Activated CD4-positive, alpha-beta T cell treated with anti-CD3 and anti-CD28 coated beads, Interleukin-2, amount 10 ng/mL, durations not matched to agents 24 days and 14 days (primary cell): ENCODE measurements at regions of chr3 and their contacts with region 1.

Region 1: GRCh38 chr3:141738022-141738890 is at the start of gene RNF7:
- DNase-seq: peak; percentile 99
- H3K4me3 Mint-ChIP-seq: peak within 1 kb of the TSS; percentile 92
- H3K27ac Mint-ChIP-seq: peak within 1 kb of the TSS; percentile 98
- H3K4me1 Mint-ChIP-seq: peaks cover 23% of the 10 kb centered on the region
- H3K27me3 Mint-ChIP-seq: peaks cover 3% of the 10 kb centered on the region
- total RNA-seq, gene RNF7: 67.3 and 72.5 TPM in 2 replicates

Region 2: DNA sequence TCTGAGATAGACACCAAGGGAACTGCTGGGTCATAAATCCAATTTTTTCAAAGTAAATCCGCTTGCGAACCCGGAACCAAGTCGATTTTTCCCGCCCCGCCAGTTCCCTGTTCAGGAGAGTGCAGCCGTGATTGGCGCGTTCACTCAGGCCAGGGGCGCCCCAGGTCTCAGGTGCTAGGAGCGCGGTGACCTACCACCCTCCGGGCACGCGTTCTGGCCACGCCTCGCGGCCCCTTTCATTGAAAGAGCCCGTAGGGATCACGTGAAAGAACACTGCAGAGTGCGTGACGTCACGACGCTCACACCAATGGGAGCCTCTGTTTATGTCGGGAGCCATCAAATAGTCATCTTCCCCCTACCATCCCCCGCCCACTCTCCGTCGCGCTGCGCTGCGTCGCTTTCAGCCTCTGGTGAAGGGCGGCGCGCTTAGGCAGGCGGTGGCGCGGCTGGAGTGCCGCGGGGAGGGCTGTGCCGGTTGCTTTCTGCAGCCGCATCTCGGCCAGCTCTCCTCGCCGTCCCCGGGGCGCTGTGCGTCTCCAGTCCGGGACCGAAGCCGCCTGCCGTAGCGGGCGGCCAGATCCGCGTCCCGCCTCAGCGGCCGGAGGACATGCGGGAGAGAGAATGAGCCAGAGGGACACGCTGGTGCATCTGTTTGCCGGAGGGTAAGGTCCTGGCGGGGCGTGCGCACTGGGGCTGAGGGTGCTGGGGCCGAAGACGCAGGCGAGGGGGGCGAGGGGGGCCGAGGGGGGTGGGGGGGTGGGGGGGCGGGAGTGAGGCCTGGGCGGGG is 796.6 kb before region 1 on chr3 and contains the start of gene SLC25A36:
- intact Hi-C with region 1: loop called (anchors 10 kb)
- DNase-seq: peak; percentile 98
- H3K4me3 Mint-ChIP-seq: peak within 1 kb of the TSS; percentile 97
- H3K27ac Mint-ChIP-seq: peak within 1 kb of the TSS; percentile 96
- H3K4me1 Mint-ChIP-seq: peaks cover 27% of the 10 kb centered on the region
- H3K27me3 Mint-ChIP-seq: peaks cover 25% of the 10 kb centered on the region
- total RNA-seq, gene SLC25A36: 56.3 and 58.9 TPM in 2 replicates

Region 3: GRCh38 chr3:141460097-141460704 is 278.1 kb before region 1 on chr3:
- intact Hi-C with region 1: loop called (anchors 5 kb)
- DNase-seq: peak; percentile 96
- H3K4me3 Mint-ChIP-seq: no peak overlapping the region
- H3K27ac Mint-ChIP-seq: no peak overlapping the region
- H3K4me1 Mint-ChIP-seq: peaks cover 19% of the 10 kb centered on the region
- H3K27me3 Mint-ChIP-seq: peaks cover 1% of the 10 kb centered on the region

Region 4: DNA sequence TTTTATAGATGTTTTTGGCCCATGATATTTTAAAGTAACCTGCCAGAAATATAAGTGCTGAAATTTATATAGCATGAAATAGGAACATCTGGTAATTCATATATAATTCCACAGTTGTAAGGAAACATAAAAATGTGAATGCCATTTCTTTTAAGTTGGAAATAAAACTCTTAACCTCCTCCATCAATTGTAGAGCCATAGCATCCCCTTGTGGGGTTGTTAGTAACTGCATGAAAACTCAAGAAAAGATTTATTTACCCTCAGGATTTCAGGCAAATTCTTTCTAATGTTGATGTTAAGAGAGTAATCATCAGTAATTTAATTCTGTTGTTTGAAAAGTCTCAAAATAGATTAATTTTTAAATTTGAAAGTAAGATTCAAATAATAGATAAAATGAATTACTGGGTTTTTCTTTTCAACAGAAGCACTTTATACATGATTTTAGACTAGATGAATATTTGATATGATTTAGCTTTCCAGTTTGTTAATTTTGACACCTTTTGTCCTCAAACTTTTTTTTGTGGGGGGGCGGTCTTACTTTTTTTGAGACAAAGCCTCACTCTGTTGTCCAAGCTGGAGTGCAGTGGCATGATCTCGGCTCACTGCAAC is 176.7 kb before region 1 on chr3:
- intact Hi-C with region 1: no loop called
- DNase-seq: peak; percentile 87
- H3K4me3 Mint-ChIP-seq: no peak overlapping the region
- H3K27ac Mint-ChIP-seq: no peak overlapping the region
- H3K4me1 Mint-ChIP-seq: peaks cover 13% of the 10 kb centered on the region
- H3K27me3 Mint-ChIP-seq: no peaks in the 10 kb centered on the region

Region 5: DNA sequence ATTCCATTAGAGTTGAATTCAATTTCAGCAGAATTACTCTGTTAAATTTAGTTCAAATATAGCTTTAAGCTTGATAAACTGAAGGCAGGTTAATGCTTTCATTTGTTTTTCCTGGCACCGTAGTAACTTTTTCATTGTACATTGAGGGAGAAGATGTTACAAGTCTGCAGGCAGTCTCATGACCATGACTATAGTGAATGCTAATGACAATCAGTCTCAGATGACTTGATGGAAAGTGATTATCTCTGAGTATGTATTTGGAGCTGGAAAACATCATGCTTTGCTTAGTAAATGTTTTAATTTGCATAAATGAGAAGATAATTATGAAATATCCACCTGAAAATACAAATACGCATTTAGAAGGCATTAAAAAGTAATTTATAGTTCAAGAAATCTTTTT is 16.2 kb before region 1 on chr3:
- intact Hi-C with region 1: no loop called
- DNase-seq: no peak
- H3K4me3 Mint-ChIP-seq: no peak overlapping the region
- H3K27ac Mint-ChIP-seq: no peak overlapping the region
- H3K4me1 Mint-ChIP-seq: no peaks in the 10 kb centered on the region
- H3K27me3 Mint-ChIP-seq: peaks cover 14% of the 10 kb centered on the region

Region 6: DNA sequence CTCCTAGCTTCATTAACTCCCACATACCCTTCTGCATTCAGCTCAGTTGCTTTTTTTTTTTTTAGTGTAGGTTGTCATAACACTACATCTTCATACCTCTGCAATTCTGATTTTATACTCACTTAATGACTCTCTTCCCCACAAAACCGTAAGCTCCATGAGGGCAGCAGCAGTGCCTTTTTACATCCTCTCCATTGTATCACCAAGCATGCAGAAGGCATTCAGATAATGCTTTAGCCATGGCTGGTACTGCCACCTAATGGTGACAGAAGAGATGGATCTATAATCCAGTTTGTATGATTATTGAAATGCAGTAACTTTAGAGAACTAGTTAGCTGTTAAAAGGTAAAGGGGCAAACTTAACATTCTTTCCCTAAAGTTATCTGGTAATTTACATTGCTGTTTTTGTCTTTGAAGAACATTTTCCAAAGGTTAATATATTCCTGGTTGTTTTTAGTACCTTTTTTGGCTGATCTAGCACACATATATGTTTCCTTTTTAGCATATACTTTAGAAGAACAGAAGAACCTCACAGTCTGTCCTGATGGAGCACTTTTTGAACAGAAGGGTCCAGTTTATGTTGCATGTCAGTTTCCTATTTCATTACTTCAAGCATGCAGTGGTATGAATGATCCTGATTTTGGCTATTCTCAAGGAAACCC is 175.0 kb after region 1 on chr3:
- intact Hi-C with region 1: loop called (anchors 1 kb)
- DNase-seq: peak; percentile 86
- H3K4me3 Mint-ChIP-seq: no peak overlapping the region
- H3K27ac Mint-ChIP-seq: peak overlapping the region; percentile 12
- H3K4me1 Mint-ChIP-seq: peaks cover 6% of the 10 kb centered on the region
- H3K27me3 Mint-ChIP-seq: no peaks in the 10 kb centered on the region

Region 7: GRCh38 chr3:142224482-142225072 is 486.3 kb after region 1 on chr3:
- intact Hi-C with region 1: loop called (anchors 1 kb)
- DNase-seq: no peak
- H3K4me3 Mint-ChIP-seq: peak overlapping the region; percentile 95
- H3K27ac Mint-ChIP-seq: peak overlapping the region; percentile 53
- H3K4me1 Mint-ChIP-seq: peaks cover 10% of the 10 kb centered on the region
- H3K27me3 Mint-ChIP-seq: no peaks in the 10 kb centered on the region